GM23248 (cell line): ENCODE measurements at regions of chr6 and their contacts with region 1.

Region 1: DNA sequence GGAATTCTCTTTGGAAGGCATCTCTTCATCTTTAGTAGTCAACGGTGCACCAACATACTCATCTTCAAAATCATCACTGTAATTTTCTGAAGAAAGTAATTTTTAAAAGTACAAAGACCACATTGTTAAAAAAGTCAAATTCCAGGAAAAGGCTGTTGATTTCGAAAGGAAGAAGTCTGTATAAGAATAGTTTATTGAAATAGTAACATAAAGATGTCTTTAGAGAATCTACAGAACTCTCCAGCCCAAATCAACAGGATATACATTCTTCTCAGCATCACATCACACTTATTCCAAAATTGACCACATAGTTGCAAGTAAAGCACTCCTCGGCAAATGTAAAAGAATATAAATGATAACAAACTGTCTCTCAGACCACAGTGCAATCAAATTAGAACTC is 23.4 kb downstream of the CEP162 start:
- DNase-seq: no peak
- H3K4me3 ChIP-seq: no peak overlapping the region
- H3K27ac ChIP-seq: no peak overlapping the region
- H3K4me1 ChIP-seq: peaks cover 5% of the 10 kb centered on the region; the same call in 1 of the 2 replicates
- H3K27me3 ChIP-seq: no peaks in the 10 kb centered on the region

Region 2: DNA sequence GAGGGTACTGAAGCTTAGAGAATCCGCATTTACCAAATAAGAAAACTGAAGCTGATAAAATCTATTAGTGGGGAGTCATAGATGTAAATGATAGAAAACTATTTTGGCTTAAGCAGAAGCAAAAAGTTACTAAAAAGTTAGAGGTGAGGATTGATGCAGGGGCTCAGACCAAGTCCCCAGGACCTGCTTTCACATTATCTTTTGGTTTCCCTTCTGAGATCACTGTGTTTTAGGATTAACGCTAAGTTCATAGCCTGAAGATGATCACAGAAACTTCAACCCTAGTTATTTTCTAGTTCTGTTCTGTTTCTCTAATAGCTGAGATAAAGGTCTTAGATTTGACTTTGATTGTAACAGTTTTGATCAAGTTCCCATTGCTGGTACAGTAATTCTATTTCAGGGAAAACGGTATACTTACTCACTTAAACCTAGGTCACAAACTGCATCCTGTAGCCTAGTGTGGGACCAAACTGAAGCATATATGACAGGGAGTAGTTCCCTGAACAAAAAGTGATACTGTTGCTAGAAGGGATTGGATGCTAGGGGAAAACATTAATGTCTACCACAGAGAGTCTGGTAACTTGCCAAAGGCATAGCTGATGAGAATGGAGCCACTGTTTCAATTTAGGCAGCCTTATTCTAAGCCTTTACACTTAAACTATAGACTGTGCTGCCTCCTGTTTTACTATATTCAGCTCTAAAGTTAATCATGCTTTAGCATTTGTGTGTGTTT is 331.5 kb before region 1 on chr6:
- in situ Hi-C with region 1: loop called (anchors 10 kb)
- DNase-seq: no peak
- H3K4me3 ChIP-seq: no peak overlapping the region
- H3K27ac ChIP-seq: no peak overlapping the region
- H3K4me1 ChIP-seq: peaks cover 19% of the 10 kb centered on the region
- H3K27me3 ChIP-seq: no peaks in the 10 kb centered on the region

Region 3: GRCh38 chr6:84449220-84449619 is 245.2 kb after region 1 on chr6:
- in situ Hi-C with region 1: no loop called
- DNase-seq: no peak
- H3K4me3 ChIP-seq: no peak overlapping the region
- H3K27ac ChIP-seq: no peak overlapping the region
- H3K4me1 ChIP-seq: peaks cover 9% of the 10 kb centered on the region
- H3K27me3 ChIP-seq: no peaks in the 10 kb centered on the region